Breast epithelium (tissue), 4 donors: ENCODE measurements at regions of chr3 and their contacts with region 1.

Region 1: DNA sequence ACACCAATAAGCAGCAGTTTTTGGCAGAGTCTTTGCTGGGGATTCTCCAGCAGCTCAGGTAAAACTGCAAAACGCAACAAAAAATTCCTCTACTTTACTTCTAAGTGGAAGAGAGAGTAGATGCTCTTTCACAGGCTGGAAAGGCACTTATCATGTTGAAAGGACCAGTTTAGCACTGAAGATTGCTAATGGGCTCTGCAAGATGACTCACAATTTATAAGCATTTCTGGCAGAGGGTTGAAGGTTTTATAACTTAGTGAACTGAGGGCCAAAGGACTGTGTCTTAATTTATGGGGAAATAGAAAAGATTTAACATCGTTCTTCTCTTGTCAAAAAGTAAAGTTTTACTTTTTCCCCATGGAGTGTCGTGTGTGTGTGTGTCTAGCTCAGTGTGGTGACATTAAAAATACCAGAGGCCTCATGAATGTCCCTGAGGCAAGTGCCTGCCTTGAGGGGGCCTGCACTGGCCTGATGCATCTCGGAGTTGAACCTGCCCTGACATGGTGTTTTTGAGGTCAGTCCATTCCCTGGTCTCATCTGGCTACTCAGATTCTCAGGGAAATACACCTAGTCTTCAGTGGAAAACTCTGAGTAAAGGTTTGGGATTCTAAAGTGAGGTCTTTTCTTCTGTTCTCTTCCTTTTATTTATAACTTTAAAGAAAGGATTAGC is 1092.0 kb downstream of the NAALADL2 start:
- DNase-seq: no peak
- H3K4me3 ChIP-seq: no peak overlapping the region
- H3K27ac ChIP-seq: no peak overlapping the region
- H3K4me1 ChIP-seq: no peaks in the 10 kb centered on the region
- H3K27me3 ChIP-seq: no peaks in the 10 kb centered on the region
- CTCF ChIP-seq: no peak
- POLR2A ChIP-seq: no peak

Region 2: GRCh38 chr3:174896551-174896950 is 1054.6 kb before region 1 on chr3:
- intact Hi-C with region 1: loop called (anchors 5 kb)
- DNase-seq: no peak
- H3K4me3 ChIP-seq: no peak overlapping the region
- H3K27ac ChIP-seq: no peak overlapping the region
- H3K4me1 ChIP-seq: no peaks in the 10 kb centered on the region
- H3K27me3 ChIP-seq: no peaks in the 10 kb centered on the region
- CTCF ChIP-seq: no peak
- POLR2A ChIP-seq: no peak

Region 3: DNA sequence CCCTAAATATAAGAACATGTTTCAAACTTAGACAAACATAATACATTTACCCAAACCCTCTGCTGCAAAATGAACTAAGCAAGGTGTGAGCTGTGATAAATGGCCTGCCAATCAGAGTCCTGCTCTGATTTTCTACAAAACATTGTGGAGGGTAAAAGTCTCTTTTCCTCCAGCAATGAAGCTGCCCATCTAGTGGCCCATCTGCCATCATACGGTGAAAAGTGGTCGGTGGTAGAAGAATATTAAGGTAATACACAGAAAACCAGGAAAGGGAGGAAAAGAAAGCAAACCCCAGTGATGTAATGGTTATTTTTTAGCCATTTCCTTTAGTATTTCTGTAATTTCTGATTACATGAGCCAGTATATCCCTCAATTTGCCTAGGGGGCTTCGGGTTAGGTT is 408.0 kb after region 1 on chr3:
- intact Hi-C with region 1: no loop called
- DNase-seq: no peak
- H3K4me3 ChIP-seq: no peak overlapping the region
- H3K27ac ChIP-seq: no peak overlapping the region
- H3K4me1 ChIP-seq: no peaks in the 10 kb centered on the region
- H3K27me3 ChIP-seq: no peaks in the 10 kb centered on the region
- CTCF ChIP-seq: no peak
- POLR2A ChIP-seq: no peak